Activated CD8-positive, alpha-beta memory T cell treated with anti-CD3 and anti-CD28 coated beads, Interleukin-2, amount 10 ng/mL, durations not matched to agents 7 days and 5 days (primary cell): ENCODE measurements at regions of chr16 and their contacts with region 1.

Region 1: GRCh38 chr16:69930117-69930776 is 20.9 kb upstream of the CLEC18A start:
- DNase-seq: peak; percentile 53
- ATAC-seq: peak; percentile 90
- H3K4me3 Mint-ChIP-seq: no peak overlapping the region
- H3K27ac Mint-ChIP-seq: no peak overlapping the region
- H3K4me1 Mint-ChIP-seq: peaks cover 4% of the 10 kb centered on the region
- H3K27me3 Mint-ChIP-seq: no peaks in the 10 kb centered on the region

Region 2: GRCh38 chr16:69796351-69797118 is 133.7 kb before region 1 on chr16:
- CTCF ChIA-PET with region 1: interaction called, 24 read pairs
- DNase-seq: peak; percentile 43
- ATAC-seq: peak; percentile 64
- H3K4me3 Mint-ChIP-seq: no peak overlapping the region
- H3K27ac Mint-ChIP-seq: no peak overlapping the region
- H3K4me1 Mint-ChIP-seq: no peaks in the 10 kb centered on the region
- H3K27me3 Mint-ChIP-seq: no peaks in the 10 kb centered on the region